ENCODE measurements at regions of chr7 and their contacts with region 1.

Region 1: GRCh38 chr7:51255536-51256208 is 60.9 kb downstream of the COBL start:
- DNase-seq: no peak
- ATAC-seq: peak; percentile 56
- H3K4me3 ChIP-seq: no peak overlapping the region
- H3K27ac ChIP-seq: no peak overlapping the region
- H3K4me1 ChIP-seq: peaks cover 26% of the 10 kb centered on the region
- H3K27me3 ChIP-seq: no peaks in the 10 kb centered on the region
- CTCF ChIP-seq: no peak
- EP300 ChIP-seq: no peak
- POLR2A ChIP-seq: no peak
- RAD21 ChIP-seq: no peak

Region 2: DNA sequence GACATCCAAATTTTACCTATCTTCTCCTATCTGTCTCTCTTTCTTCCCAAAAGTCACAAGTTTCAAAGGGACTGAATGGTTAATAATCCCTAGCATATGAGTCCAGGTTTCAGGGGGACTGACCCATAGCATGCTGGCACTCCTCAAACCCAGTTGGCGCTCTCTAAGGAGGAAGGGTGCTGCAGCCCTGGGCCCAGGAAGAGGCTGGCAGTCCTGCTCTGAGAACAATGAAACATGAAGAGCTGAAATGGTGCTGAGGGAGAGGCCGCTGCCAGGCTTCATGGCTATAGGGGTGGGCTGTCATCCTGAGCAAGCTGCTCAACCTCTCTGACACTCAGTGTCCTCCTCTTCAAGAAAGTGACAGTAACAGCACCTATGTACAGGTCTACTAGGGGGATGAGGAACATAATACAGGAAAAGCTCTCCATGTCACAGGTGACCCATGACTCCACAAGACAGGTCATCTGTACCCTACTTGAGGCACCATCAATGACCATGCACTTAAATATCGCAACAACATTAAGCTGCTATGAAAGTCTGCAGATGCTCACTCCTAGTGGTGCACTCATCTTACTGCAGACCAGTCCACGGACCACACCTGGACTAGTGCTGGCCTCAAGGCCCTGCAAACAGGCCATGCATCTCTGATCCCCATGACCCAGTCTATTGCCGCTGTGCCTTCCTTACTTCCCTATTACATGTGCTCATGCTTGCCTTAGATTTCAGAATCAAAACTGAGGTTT is 43.9 kb after region 1 on chr7:
- CTCF ChIA-PET with region 1: no interaction called
- POLR2A ChIA-PET with region 1: no interaction called
- in situ Hi-C with region 1: no loop called
- intact Hi-C with region 1: loop called (anchors 1 kb)
- DNase-seq: no peak
- ATAC-seq: peak; percentile 81
- H3K4me3 ChIP-seq: no peak overlapping the region
- H3K27ac ChIP-seq: no peak overlapping the region
- H3K4me1 ChIP-seq: peaks cover 9% of the 10 kb centered on the region
- H3K27me3 ChIP-seq: no peaks in the 10 kb centered on the region
- CTCF ChIP-seq: no peak
- EP300 ChIP-seq: no peak
- POLR2A ChIP-seq: no peak
- RAD21 ChIP-seq: no peak

Region 3: GRCh38 chr7:51666751-51667150 is 411.1 kb after region 1 on chr7:
- CTCF ChIA-PET with region 1: no interaction called
- POLR2A ChIA-PET with region 1: no interaction called
- in situ Hi-C with region 1: no loop called
- intact Hi-C with region 1: no loop called
- DNase-seq: no peak
- ATAC-seq: no peak
- H3K4me3 ChIP-seq: no peak overlapping the region
- H3K27ac ChIP-seq: no peak overlapping the region
- H3K4me1 ChIP-seq: no peaks in the 10 kb centered on the region
- H3K27me3 ChIP-seq: peaks cover 0 to 13% of the 10 kb centered on the region in 2 experiments; a peak in 1 of 5 replicates
- CTCF ChIP-seq: no peak
- EP300 ChIP-seq: no peak
- POLR2A ChIP-seq: no peak
- RAD21 ChIP-seq: no peak

Measured in HepG2 (cell line).